Right cardiac atrium (tissue), 5 donors: ENCODE measurements at regions of chr6 and their contacts with region 1.

Region 1: GRCh38 chr6:28981833-28982475 is 23.2 kb downstream of the ZNF311 start:
- DNase-seq: peak; percentile 76 to 87 (median 82)
- ATAC-seq: peak; percentile 84 to 88
- H3K4me3 ChIP-seq: peak overlapping the region; percentile 84
- H3K27ac ChIP-seq: peak overlapping the region; percentile 60
- H3K4me1 ChIP-seq: peaks cover 2% of the 10 kb centered on the region
- H3K27me3 ChIP-seq: no peaks in the 10 kb centered on the region

Region 2: DNA sequence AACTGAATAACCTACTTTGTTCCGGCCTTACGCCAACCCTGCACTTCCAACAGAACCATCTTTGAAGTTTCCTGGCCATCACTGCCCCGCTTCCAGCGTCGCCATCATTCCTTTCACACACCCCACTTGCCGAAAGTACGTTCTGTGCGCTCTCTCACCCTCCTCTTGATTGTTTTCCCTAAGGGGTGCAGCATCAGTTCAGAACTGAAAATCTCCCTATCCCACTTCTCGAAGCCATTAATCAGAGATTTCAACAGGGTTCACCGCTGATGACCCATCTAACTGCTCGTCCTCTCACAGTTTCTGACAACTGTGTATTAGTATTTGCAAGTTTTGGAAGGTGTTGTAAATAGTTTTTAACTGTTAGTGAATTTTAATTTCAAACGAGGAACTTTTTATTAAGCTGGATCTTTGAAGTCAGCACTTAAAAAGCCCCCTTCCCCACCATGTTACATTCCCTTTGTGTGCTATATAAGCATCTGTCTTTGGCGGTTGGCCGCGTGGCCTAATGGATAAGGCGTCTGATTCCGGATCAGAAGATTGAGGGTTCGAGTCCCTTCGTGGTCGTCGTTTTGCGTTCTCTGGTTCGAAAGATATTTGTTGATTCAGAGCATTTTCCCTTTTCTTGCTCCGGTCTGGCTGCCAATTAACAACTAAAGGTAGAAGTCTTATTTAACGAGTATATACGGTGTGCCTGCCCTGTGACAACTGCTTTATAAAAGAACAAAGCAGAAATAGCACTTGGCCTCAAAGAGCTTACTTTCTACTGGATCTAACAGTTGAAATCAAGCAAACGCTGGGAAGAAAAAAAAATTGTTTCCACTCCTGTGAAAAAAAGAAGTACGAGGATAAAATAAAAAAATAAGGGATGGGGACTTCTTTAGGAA is 100.8 kb before region 1 on chr6:
- intact Hi-C with region 1: loop called in 1 of 4 experiments (anchors 10 kb)
- DNase-seq: peak; percentile 71 to 86 (median 81)
- ATAC-seq: peak; percentile 86 to 90
- H3K4me3 ChIP-seq: peak overlapping the region; percentile 98
- H3K27ac ChIP-seq: no peak overlapping the region
- H3K4me1 ChIP-seq: no peaks in the 10 kb centered on the region
- H3K27me3 ChIP-seq: no peaks in the 10 kb centered on the region

Region 3: GRCh38 chr6:28923318-28924102 is 58.4 kb before region 1 on chr6 and contains the start of gene TRIM27:
- intact Hi-C with region 1: loop called in 1 of 4 experiments (anchors 5 kb)
- DNase-seq: peak; percentile 95 to 98 (median 97)
- ATAC-seq: peak; percentile 97
- H3K4me3 ChIP-seq: peak within 1 kb of the TSS; percentile 50
- H3K27ac ChIP-seq: peak within 1 kb of the TSS; percentile 96
- H3K4me1 ChIP-seq: peaks cover 2% of the 10 kb centered on the region
- H3K27me3 ChIP-seq: no peaks in the 10 kb centered on the region
- total RNA-seq, gene TRIM27: 17.9 to 23.1 (median 22.0) TPM

Region 4: GRCh38 chr6:28940858-28941680 is 40.9 kb before region 1 on chr6:
- intact Hi-C with region 1: loop called (anchors 2 to 5 kb)
- DNase-seq: peak; percentile 68 to 82 (median 68)
- ATAC-seq: peak; percentile 91 to 93
- H3K4me3 ChIP-seq: peak overlapping the region; percentile 94
- H3K27ac ChIP-seq: peak overlapping the region; percentile 91
- H3K4me1 ChIP-seq: no peaks in the 10 kb centered on the region
- H3K27me3 ChIP-seq: no peaks in the 10 kb centered on the region

Region 5: DNA sequence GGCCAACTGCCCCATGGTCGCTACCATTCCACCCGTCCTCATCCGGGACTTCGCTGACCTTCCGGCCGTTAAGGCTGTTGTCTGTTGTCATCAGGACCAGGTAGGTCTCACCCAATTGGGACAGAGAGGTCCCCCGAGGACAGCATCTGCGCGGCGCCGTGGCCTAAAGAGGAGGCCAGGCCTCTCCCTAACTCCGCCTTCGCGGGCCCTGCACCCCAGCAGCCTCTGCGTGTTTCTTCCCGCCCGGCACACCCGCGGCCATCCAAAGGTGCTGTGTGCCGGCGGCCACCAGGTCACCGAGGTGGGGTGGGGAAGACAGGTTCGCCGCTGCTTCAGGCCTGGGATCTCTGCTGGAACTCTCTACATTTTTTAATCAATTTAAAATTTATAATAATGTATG is 54.0 kb after region 1 on chr6:
- intact Hi-C with region 1: no loop called
- DNase-seq: peak in 1 of 3 donors; percentile 6
- ATAC-seq: no peak
- H3K4me3 ChIP-seq: no peak overlapping the region
- H3K27ac ChIP-seq: no peak overlapping the region
- H3K4me1 ChIP-seq: no peaks in the 10 kb centered on the region
- H3K27me3 ChIP-seq: no peaks in the 10 kb centered on the region

Region 6: GRCh38 chr6:29355603-29356002 is 373.6 kb after region 1 on chr6:
- intact Hi-C with region 1: no loop called
- DNase-seq: no peak
- ATAC-seq: no peak
- H3K4me3 ChIP-seq: no peak overlapping the region
- H3K27ac ChIP-seq: no peak overlapping the region
- H3K4me1 ChIP-seq: no peaks in the 10 kb centered on the region
- H3K27me3 ChIP-seq: no peaks in the 10 kb centered on the region